Left cardiac atrium (tissue), 4 donors: ENCODE measurements at regions of chr4 and their contacts with region 1.

Region 1: DNA sequence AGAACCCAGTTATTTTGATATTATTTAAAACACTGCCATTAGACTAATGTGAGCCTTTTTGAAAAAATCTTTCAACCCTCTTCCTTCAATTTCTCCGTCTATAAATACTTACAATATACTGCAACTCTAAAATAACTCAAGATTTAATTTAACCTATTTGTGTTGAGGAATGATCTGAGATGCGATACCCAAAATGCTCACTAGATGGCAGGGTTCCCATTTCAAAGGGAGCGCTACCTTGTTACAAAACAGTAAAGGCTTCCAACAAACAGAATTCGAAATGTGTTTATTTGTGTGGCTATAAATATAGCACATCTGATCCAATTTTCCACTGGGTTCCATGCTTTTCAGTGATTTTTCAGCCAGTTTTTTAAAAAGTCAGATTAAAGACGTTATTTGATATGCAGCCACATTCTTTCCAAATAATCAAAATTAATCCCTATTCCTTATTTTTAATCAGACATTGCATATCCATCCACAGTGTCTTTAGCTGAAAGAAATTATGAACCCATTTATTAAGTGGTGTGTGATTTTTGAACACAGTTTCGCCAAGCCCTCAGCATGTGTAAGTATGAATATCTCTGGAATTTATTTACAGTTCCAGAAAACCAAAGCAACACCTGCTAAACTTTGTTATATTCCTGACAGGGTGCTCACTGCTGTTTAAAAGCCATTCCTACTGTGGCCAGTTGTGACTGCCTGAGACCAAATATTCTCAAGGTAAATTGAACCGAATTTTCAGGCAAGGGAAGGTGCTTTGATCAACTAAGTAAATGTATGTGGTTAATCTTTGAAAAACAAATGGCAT is 668.0 kb upstream of the LCORL start:
- DNase-seq: no peak
- ATAC-seq: peak; percentile 36 to 61

Region 2: DNA sequence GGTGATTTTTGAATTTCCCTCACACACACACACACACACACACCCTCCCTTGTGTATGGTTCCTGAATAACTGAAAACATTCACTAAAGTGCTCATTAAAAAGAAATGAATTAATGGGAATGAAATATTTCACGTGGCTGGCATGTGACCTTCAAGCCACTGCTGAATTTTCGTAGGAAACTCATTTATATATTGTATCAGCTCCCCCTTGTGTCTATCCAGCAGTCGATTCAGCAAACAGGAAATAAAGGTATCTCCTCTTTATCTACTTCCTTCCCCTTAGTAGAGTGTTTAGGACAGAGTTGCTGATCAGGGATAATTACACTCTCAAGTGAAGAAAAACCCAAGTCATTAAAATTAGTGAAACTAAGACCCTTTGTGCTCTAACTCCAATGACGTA is 244.7 kb after region 1 on chr4:
- intact Hi-C with region 1: loop called in 1 of 2 experiments (anchors 2 kb)
- DNase-seq: no peak
- ATAC-seq: peak in 1 of 2 donors; percentile 47

Region 3: GRCh38 chr4:18945464-18945863 is 256.0 kb after region 1 on chr4:
- intact Hi-C with region 1: loop called in 1 of 2 experiments (anchors 5 kb)
- DNase-seq: no peak
- ATAC-seq: no peak